Dendritic cell treated with granulocyte-macrophage colony-stimulating factor and Interleukin-4, amounts not matched to agents 40 ng/mL and 50 ng/mL, for 4 days (primary cell): ENCODE measurements at regions of chr1 and their contacts with region 1.

Region 1: GRCh38 chr1:169928438-169929209 is 34.9 kb upstream of the SCYL3 start:
- H3K4me3 Mint-ChIP-seq: no peak overlapping the region
- H3K27ac Mint-ChIP-seq: no peak overlapping the region
- H3K4me1 Mint-ChIP-seq: no peaks in the 10 kb centered on the region
- H3K27me3 Mint-ChIP-seq: no peaks in the 10 kb centered on the region

Region 2: DNA sequence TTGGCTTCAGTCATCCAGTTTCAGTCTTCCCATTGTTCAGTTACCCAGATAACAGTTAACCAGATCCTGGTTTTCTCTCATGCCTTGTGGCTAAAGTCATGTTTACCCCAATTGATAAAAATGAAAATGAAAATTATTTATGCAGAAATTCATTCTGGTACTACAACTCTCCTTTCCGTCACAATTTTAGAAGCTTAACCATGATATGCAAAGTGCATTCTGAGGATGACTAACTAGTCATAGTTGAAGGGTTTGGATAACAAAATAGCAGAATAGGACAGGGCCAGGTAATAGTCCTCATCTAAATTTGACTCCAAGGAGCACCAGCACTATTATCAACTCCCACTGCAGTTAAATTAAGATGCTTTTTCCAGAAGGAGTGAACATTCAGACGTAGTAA is 311.8 kb after region 1 on chr1:
- intact Hi-C with region 1: no loop called
- H3K4me3 Mint-ChIP-seq: no peak overlapping the region
- H3K27ac Mint-ChIP-seq: no peak overlapping the region
- H3K4me1 Mint-ChIP-seq: no peaks in the 10 kb centered on the region
- H3K27me3 Mint-ChIP-seq: no peaks in the 10 kb centered on the region

Region 3: GRCh38 chr1:170881268-170882265 is 952.9 kb after region 1 on chr1:
- intact Hi-C with region 1: loop called (anchors 5 kb)
- H3K4me3 Mint-ChIP-seq: no peak overlapping the region
- H3K27ac Mint-ChIP-seq: no peak overlapping the region
- H3K4me1 Mint-ChIP-seq: no peaks in the 10 kb centered on the region
- H3K27me3 Mint-ChIP-seq: no peaks in the 10 kb centered on the region

Region 4: DNA sequence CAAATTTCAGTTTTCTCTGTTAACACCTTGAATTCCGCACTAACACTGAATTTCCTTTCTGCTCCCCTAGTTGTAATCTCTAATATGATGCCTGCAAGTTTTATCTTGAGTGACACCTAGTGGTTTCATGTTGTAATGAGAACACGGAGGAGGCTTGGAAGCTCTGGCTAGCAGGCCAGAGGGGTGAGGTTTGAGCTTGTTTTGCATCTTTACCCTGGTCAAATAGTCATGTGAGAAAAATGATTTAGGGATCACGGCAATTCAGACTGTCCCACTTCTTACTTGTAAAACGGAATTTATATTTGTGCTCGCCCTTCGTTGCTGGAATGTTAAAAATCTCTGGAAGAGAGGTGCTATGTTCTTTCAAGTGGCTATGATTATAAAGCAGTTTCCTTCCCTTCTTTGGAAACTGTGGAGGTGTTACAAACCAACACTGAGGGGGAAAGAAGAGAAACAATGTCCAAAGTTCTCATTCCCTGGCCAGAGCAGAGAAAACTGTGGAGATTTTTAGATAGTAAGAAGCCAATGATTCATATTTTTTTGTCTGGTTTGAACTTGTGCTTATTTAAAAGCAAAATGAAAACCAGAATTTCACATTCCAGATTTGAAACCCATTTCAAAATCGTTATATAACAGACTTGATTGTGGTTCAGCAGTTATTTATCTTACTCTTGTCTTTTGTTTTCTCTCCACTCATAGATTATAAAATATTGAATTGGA is 1001.4 kb after region 1 on chr1:
- intact Hi-C with region 1: loop called (anchors 2 kb)
- H3K4me3 Mint-ChIP-seq: no peak overlapping the region
- H3K27ac Mint-ChIP-seq: no peak overlapping the region
- H3K4me1 Mint-ChIP-seq: no peaks in the 10 kb centered on the region
- H3K27me3 Mint-ChIP-seq: no peaks in the 10 kb centered on the region

Region 5: DNA sequence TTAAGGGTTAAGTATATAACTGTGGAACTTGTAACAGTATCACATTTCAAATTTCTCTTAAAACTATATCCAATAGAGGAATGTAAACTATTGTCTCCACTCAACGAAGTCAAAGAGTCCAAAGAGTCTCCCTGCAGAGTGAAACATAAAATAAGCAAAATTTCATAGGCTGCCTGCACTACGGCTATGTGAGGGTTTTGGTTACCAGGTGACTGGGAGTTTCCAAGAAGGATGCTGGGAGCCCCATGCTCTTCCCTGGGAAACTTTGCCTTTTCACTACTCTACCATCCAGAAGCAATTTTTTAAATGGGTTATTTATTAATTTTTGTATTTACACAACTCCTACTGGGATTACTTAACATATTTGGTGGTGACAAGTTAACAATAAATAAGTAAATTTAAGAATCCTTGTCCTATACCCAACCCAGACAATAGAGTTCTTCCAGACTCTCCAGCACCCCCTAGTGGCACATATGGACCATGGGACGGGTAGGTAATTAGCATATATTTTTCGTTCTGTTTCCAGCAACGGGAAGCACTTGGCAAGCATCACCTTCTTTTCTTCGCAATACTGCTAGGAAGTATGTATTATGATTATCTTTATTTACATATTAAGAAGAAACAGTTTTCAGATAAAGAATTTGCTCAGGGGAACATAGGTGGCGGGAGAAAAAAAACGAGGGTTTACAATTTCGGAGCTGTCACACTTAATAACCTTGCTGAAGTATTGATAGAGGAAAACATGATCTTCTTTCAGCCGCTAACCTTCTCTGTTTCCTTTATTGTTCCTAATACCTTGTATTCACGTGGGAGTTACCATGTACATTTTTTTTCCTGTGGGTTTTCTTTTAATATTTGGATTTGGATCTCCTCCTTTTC is 1260.0 kb after region 1 on chr1:
- intact Hi-C with region 1: loop called (anchors 5 kb)
- H3K4me3 Mint-ChIP-seq: no peak overlapping the region
- H3K27ac Mint-ChIP-seq: no peak overlapping the region
- H3K4me1 Mint-ChIP-seq: no peaks in the 10 kb centered on the region
- H3K27me3 Mint-ChIP-seq: no peaks in the 10 kb centered on the region